ENCODE measurements at regions of chr6 and their contacts with region 1.

Region 1: DNA sequence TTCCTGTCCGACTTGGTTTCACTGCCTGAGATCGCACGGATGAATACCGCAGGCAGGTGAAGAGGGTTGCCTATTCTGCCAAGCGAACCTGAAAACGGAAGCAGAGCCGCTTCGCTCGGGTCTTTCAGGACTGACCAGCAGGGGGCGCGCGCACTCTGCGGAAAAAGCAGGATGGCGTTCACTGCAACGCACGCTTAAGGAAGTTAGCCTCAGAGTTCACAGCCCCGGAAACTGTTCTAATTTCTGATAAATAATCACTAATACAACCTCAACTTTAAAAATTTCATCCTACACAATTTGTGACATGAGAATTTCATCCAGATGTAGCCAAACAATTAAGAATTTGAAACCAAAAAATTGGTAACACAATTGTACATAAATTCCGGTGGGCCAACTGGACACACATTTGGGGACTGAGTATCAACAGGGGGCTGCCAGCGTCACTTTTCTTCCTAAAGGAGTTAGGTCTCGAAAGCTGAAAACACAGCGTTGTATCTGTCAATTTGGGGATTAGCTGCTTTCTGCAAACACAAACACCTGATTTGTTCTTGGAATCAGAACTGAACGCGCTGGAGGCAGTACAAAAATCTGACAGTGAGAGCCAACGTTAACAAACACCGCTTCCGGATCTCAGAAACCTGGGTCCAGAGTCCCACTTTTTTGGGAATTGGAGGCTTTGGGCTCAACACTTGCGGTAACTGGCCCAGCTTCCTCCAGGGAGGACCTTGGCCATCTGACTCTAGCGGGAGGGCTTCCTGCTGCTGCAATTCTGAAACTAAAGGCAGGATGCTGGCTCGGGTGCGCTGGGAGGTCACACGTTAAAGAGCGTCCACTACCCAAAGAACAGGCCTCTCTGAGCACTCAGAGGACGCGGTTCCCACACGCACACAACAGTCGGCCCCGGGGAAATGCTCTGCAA is 8.8 kb downstream of the PXDC1 start:
- DNase-seq: peak; percentile 86 to 91
- ATAC-seq: peak; percentile 63 to 89 (median 82)
- H3K4me3 ChIP-seq: peak overlapping the region in 8 of 10 donors; percentile 2 to 39 (median 22)
- H3K27ac ChIP-seq: peak overlapping the region; percentile 66 to 88 (median 77)
- H3K4me1 ChIP-seq: peaks cover 36 to 99% (median 71%) of the 10 kb centered on the region in 9 donors
- H3K27me3 ChIP-seq: no peaks in the 10 kb centered on the region
- CTCF ChIP-seq: peak; percentile 88 to 98 (median 95)

Region 2: DNA sequence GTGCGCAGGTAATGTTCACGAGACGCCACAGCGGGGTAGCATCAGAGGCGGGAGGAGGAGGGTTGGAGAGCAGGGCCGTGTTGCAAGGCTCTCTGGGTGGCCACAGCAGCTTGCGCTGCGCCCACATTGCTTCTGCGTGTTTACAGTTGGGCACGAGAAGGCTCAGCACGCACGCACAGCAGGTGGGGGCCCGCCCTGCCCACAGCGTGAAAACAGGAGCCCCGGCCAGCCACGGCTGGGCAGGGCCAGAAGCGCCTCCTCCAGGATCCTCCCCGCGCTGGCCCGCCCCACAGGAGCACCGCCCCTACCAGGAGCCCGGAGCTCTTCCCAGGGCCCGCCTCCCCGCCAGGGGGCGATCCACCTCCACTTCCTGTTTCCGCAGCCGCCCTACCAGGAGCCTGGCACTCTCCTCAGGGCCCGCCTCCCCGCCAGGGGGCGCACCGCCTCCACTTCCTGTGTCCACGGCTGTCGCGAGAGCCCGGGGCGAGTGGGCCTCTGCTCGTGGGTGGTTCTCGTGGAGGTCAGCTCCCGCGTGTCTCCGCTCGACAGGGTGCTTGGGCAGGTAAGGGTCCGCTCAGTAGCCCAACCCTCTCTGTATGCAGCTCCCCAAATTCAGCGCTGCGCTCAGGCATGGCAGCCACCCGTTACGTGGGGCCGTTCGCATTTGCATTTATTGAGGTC is 106.4 kb after region 1 on chr6 and contains the start of gene FAM50B:
- intact Hi-C with region 1: loop called in 2 of 10 experiments (anchors 1 to 5 kb)
- DNase-seq: peak; percentile 92 to 96
- ATAC-seq: peak; percentile 95 to 100 (median 98)
- H3K4me3 ChIP-seq: peak within 1 kb of the TSS; percentile 29 to 69 (median 60)
- H3K27ac ChIP-seq: peak within 1 kb of the TSS in 9 of 10 donors; percentile 69 to 83 (median 78)
- H3K4me1 ChIP-seq: peaks cover 0 to 28% (median 5%) of the 10 kb centered on the region in 9 donors
- H3K27me3 ChIP-seq: no peaks in the 10 kb centered on the region
- CTCF ChIP-seq: peak; percentile 84 to 98 (median 96)
- total RNA-seq, gene FAM50B: 13.2 to 31.3 (median 22.4) TPM

Region 3: GRCh38 chr6:3929281-3929798 is 186.7 kb after region 1 on chr6:
- intact Hi-C with region 1: loop called in 9 of 10 experiments (anchors 2 to 10 kb)
- DNase-seq: no peak
- ATAC-seq: peak in 1 of 8 donors; percentile 50
- H3K4me3 ChIP-seq: no peak overlapping the region
- H3K27ac ChIP-seq: peak overlapping the region in 5 of 10 donors; percentile 5 to 56 (median 14)
- H3K4me1 ChIP-seq: peaks cover 0 to 40% (median 9%) of the 10 kb centered on the region in 9 donors
- H3K27me3 ChIP-seq: no peaks in the 10 kb centered on the region
- CTCF ChIP-seq: no peak

Region 4: DNA sequence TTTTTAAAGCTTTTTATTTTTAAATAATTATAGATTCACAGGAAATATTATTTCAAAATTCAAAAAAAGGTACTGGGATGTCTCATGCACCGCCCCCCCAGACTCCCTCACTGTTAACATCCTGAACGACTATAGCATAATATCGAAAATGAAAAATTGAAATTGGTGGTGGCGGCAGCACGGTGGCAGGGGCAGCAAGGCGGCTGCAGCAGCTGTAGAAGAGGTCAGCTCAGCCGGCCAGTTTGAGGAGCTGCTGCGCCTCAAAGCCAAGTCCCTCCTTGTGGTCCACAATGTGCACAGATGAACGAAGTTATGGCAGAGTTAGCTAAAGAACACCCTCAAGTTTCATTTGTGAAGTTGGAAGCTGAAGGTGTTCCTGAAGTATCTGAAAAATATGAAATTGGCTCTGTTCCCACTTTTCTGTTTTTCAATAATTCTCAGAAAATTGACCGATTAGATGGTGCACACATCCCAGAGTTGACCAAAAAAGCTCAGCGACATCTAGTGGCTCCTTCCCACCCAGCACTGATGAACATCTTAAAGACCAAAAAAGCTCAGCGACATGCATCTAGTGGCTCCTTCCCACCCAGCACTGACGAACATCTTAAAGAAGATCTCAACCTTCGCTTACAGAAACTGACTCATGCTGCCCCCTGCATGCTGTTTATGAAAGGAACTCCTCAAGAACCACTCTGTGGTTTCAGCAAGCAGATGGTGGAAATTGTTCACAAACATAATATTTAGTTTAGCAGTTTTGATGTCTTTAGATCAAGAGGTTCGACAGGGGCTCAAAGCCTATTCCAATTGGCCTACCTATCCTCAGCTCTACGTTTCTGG is 235.4 kb after region 1 on chr6:
- intact Hi-C with region 1: loop called in 3 of 10 experiments (anchors 5 to 10 kb)
- DNase-seq: peak in 1 of 2 donors; percentile 24
- ATAC-seq: peak; percentile 75 to 92 (median 86)
- H3K4me3 ChIP-seq: no peak overlapping the region
- H3K27ac ChIP-seq: no peak overlapping the region
- H3K4me1 ChIP-seq: peaks cover 0 to 5% (median 0%) of the 10 kb centered on the region in 9 donors
- H3K27me3 ChIP-seq: no peaks in the 10 kb centered on the region
- CTCF ChIP-seq: peak; percentile 22 to 73 (median 64)

Region 5: GRCh38 chr6:4135665-4136353 is 393.1 kb after region 1 on chr6:
- intact Hi-C with region 1: loop called in 1 of 10 experiments (anchors 10 kb)
- DNase-seq: peak; percentile 98 to 99
- ATAC-seq: peak; percentile 95 to 99 (median 96)
- H3K4me3 ChIP-seq: peak overlapping the region; percentile 33 to 96 (median 75)
- H3K27ac ChIP-seq: peak overlapping the region; percentile 75 to 96 (median 92)
- H3K4me1 ChIP-seq: peaks cover 8 to 27% (median 19%) of the 10 kb centered on the region in 9 donors
- H3K27me3 ChIP-seq: no peaks in the 10 kb centered on the region
- CTCF ChIP-seq: peak in 2 of 9 donors; percentile 10 to 13